SK-MEL-5 (cell line): ENCODE measurements at regions of chr2 and their contacts with region 1.

Region 1: DNA sequence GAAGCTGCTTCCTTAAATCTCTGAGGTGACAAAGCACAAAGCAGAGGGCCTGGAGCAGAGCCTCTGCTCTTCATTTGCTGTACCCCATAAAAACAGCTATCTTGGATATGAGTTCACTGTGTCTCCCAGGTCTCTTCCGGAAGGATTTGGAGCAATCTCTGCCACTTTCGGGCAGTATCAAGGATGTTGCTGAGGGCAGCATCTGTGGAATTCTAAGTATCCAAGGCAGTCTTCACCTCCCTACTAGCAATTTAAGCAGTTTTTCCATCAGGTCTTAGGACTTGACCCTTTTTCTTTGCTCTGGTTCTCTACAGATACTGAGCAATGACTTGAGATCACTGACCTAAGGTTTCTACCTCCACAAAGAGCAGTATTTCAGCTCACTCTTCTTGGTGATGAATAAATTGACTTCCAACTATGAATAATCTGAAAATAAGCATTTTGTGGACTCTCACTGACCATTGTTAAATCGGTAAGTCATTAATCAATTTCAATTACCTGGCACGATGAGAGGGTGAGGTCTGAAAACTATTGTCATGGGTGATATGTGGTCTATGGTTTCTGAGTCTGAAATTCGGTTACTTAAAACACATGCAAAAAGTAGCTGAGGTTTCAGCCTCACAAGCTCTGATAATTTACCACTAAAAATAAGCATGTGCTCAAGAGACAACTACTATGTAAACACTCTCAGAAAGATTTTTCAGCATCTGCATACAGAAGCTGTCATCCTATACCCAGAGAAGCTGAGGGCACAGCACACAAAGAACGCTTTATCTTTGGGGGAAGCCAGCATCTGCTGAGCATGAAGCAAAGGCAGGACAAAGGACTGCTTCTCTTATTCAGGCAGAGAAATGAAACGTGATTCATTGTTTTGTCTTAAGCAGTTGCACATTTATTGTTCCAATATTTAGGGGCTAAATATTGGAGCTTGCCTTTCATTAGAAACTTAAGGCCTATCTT is 32.1 kb upstream of the SPATS2L start:
- DNase-seq: peak; percentile 89

Region 2: DNA sequence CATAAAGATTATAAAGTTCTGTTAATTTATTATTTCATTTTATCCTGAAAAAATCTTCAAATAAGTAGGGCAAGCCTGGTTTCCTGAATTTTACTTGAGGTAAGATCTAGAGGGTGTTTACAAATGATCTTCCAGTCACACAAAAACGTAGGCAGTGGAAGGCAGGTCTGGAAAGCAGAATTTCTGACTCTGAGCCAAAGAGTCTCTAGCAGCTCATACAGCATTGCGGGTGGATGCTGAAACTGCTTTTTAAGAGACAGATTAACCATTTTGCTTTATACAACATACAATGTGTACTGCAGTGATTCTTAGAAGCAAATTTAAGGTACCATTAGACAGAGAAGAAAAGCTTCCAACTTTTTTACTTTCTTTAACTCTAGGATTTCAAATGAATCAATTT is 540.4 kb before region 1 on chr2:
- in situ Hi-C with region 1: no loop called
- DNase-seq: no peak

Region 3: GRCh38 chr2:200003444-200003843 is 271.0 kb before region 1 on chr2:
- in situ Hi-C with region 1: loop called (anchors 25 kb)
- DNase-seq: no peak

Region 4: DNA sequence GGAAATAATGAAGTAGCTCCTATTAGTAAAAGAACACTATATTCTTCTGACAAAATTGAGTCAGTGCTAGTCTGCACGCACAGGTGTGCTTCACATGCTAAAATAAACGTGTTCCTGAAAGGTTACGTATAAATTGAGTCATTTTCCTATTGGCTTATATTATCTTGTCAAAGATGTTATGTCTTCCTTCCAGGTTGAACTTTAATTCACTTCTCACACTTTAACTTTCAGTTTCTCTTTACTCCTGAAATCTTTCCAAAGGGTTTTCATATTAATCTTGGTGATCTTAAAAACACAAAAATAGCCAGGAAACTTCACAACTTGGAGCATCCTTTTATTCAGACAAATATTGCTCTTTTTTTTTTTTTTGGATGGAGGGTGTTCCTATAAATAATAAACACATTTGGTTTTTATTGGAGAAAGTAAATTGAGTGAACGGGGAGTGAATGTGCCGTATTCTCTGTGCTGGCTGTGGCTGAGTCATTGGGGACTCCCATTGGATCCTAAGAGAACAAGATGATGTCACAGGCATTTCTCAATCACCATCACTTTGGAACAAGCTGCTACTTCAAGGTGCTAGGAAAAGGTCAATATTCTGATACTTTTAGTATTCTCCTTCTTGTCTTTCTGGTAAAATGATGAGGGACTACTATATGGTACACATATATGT is 118.1 kb before region 1 on chr2:
- in situ Hi-C with region 1: no loop called
- DNase-seq: peak; percentile 24